ENCODE measurements at regions of chr5 and their contacts with region 1.

Region 1: GRCh38 chr5:79133657-79134451 is 22.2 kb downstream of the BHMT start:
- DNase-seq: peak; percentile 62 to 80 (median 74)
- H3K4me3 ChIP-seq: peak overlapping the region; percentile 22
- H3K27ac ChIP-seq: peak overlapping the region in 1 of 2 donors; percentile 56
- H3K4me1 ChIP-seq: no peaks in the 10 kb centered on the region
- H3K27me3 ChIP-seq: no peaks in the 10 kb centered on the region
- CTCF ChIP-seq: peak; percentile 43 to 73 (median 70)
- EP300 ChIP-seq: no peak
- POLR2A ChIP-seq: no peak

Region 2: DNA sequence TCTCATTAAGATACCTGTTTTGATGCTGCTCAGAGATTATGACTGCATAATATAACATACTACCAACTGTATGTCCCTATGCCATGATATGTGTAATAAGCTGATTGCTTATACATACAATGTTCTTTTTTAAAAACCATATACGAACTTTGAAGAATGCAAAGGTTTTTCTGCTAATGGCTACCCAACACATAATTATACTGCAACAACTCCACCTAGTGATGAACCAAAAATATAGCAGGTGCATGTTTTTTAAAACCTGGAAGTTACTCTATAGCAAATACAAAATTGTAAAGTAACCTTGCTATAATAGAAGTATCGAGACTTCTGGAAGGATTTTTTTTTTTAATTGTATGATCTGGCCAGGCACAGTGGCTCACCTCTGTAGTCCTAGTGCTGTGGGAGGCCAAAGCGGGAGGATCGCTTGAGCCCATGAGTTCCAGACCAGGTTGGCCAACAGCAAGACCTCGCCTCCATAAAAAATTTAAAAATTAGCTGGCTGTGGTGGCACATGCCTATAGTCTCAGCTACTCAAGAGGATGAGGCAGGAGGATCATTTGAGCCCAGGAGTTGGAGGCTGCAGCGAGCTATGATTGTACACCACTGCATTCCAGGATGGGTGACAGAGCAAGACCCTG is 331.0 kb after region 1 on chr5:
- intact Hi-C with region 1: loop called in 2 of 4 experiments (anchors 10 kb)
- DNase-seq: no peak
- H3K4me3 ChIP-seq: no peak overlapping the region
- H3K27ac ChIP-seq: no peak overlapping the region
- H3K4me1 ChIP-seq: no peaks in the 10 kb centered on the region
- H3K27me3 ChIP-seq: no peaks in the 10 kb centered on the region
- CTCF ChIP-seq: peak in 2 of 3 donors; percentile 35 to 42
- EP300 ChIP-seq: no peak
- POLR2A ChIP-seq: no peak